ENCODE measurements at regions of chr4 and their contacts with region 1.

Region 1: GRCh38 chr4:73187325-73187724 is 71.3 kb downstream of the ANKRD17 start:
- DNase-seq: peak; percentile 92
- H3K4me3 ChIP-seq: peak overlapping the region in 1 of 3 experiments; percentile 53
- H3K27ac ChIP-seq: peak overlapping the region; percentile 73
- H3K4me1 ChIP-seq: peaks cover 18% of the 10 kb centered on the region
- H3K27me3 ChIP-seq: no peaks in the 10 kb centered on the region
- CTCF ChIP-seq: no peak
- POLR2A ChIP-seq: peak; percentile 15

Region 2: DNA sequence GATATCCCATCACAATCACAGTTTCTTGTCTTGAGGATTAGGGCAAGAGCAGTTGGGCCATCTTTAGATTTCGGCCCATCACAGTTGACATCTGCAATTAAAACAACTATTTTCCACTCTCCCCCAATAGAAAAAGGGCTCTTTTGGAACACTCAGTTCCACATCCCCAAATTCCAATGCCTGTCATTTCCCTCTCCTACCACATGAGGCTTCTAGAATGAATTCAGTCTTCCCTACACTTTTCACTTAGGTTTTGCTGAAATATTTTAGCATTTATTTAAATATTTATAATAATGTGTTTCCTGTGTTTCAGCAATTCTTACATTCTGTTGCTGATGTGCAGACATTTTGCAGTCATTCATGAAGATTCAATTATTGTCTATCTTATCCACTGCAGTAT is 236.2 kb before region 1 on chr4:
- CTCF ChIA-PET with region 1: no interaction called
- POLR2A ChIA-PET with region 1: no interaction called
- dilution Hi-C with region 1: no loop called
- intact Hi-C with region 1: no loop called
- DNase-seq: no peak
- H3K4me3 ChIP-seq: no peak overlapping the region
- H3K27ac ChIP-seq: no peak overlapping the region
- H3K4me1 ChIP-seq: peaks cover 3% of the 10 kb centered on the region
- H3K27me3 ChIP-seq: no peaks in the 10 kb centered on the region
- CTCF ChIP-seq: peak in 1 of 2 donors; percentile 3
- POLR2A ChIP-seq: no peak

Region 3: GRCh38 chr4:73222466-73223257 is 35.3 kb after region 1 on chr4:
- CTCF ChIA-PET with region 1: interaction called, 3 read pairs
- POLR2A ChIA-PET with region 1: no interaction called
- dilution Hi-C with region 1: no loop called
- intact Hi-C with region 1: loop called (anchors 2 kb)
- DNase-seq: peak; percentile 96
- H3K4me3 ChIP-seq: peak overlapping the region; percentile 53 to 99 (median 91)
- H3K27ac ChIP-seq: peak overlapping the region; percentile 93
- H3K4me1 ChIP-seq: peaks cover 20% of the 10 kb centered on the region
- H3K27me3 ChIP-seq: no peaks in the 10 kb centered on the region
- CTCF ChIP-seq: no peak
- POLR2A ChIP-seq: peak; percentile 86

Measured in endothelial cell of umbilical vein (primary cell).